CD4-positive, alpha-beta memory T cell (primary cell): ENCODE measurements at regions of chr10 and their contacts with region 1.

Region 1: DNA sequence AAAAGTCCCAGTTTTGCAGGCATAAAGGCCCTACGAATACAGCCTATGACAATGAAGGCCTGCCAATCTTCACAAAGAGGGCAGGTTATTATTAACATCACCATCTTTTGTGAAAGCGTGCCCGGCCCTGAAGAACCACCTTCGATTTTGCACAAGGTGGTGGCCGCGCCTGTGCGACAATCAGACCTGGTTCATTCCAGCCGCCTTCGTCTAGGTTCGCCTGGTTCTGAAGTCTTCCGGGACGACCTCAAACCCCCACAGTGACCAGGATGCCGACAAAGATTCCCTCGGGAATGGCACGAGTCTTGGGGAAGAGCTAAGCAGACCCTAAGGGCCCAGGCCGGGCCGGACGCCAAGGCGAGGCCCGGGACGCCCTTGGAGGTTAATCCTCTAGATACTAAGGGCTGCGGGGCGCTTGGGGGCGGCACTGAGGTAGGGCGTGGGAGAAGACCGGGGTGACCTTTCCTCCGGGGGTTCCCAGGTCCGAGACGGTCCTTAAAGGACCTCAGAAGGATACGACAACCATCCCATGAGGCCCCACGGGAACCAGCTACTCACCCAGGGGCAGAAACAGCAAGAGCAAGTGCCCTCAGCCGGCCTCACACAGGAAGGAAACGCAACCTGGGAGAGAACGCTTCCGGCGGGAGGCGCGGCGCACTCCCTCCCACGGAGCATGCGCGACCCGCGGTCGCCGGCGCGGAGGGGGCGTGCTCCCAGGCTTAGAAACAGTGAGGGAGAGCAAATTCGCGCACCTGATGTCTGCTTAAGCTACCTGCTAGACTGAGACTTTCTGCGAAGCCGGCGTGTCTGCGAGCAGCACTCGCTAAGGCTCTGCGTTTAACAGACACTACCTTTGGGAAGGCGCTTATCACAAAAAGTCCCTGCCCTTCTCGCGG is at the start of gene ATAD1:
- DNase-seq: peak; percentile 89 to 91 (median 91)
- H3K4me3 ChIP-seq: peak within 1 kb of the TSS; percentile 85 to 95
- H3K4me3 Mint-ChIP-seq: peak within 1 kb of the TSS; percentile 88 to 98 (median 94)
- H3K27ac ChIP-seq: peak within 1 kb of the TSS; percentile 94
- H3K27ac Mint-ChIP-seq: peak within 1 kb of the TSS; percentile 94 to 99 (median 98)
- H3K4me1 ChIP-seq: peaks cover 46% of the 10 kb centered on the region
- H3K4me1 Mint-ChIP-seq: peaks cover 27 to 43% (median 35%) of the 10 kb centered on the region in 4 donors
- H3K27me3 ChIP-seq: no peaks in the 10 kb centered on the region
- H3K27me3 Mint-ChIP-seq: no peaks in the 10 kb centered on the region
- total RNA-seq, gene ATAD1: 46.5 to 52.0 TPM

Region 2: GRCh38 chr10:87734987-87735827 is 82.7 kb before region 1 on chr10:
- CTCF ChIA-PET with region 1: no interaction called
- POLR2A ChIA-PET with region 1: no interaction called
- intact Hi-C with region 1: no loop called
- DNase-seq: peak in 1 of 5 donors; percentile 4
- H3K4me3 ChIP-seq: no peak overlapping the region
- H3K4me3 Mint-ChIP-seq: no peak overlapping the region
- H3K27ac ChIP-seq: no peak overlapping the region
- H3K27ac Mint-ChIP-seq: no peak overlapping the region
- H3K4me1 ChIP-seq: no peaks in the 10 kb centered on the region
- H3K4me1 Mint-ChIP-seq: peaks cover 0 to 5% (median 0%) of the 10 kb centered on the region in 4 donors
- H3K27me3 ChIP-seq: no peaks in the 10 kb centered on the region
- H3K27me3 Mint-ChIP-seq: peaks cover 23 to 31% of the 10 kb centered on the region in 2 donors

Region 3: DNA sequence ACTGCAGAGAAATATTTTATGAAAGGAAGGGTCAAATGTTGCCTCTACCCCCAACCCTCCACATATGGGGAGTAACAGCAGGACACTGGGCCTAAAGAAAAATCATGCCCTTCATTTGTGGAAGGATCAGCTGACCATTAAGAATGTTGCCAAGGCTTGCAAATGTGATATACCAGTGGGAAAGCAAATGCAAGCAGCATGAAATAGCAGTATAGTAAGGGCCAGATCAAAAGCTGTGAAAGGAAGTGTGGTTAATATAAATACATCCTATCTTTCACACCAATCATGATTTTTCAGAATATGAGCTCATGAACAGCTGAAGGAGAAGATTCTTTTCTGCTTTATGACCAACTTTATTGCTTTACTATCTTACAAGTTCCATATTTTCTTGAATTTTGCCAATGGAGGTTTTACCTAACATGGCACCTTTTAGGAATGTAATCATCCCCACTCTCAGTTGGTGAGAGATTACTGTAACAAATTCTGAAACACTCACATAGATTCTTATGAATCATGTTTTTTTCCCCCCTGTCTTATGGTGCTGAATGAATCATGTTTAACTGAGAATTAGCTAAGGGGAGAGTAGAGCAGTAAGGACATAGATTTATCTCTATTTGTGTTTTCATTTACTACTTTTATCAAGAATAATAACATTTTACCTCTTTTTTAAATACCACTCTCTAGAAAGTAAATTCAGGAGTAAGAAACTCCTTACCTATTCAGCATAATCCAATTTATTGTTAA is 12.3 kb after region 1 on chr10:
- CTCF ChIA-PET with region 1: interaction called, 25 read pairs
- POLR2A ChIA-PET with region 1: interaction called, 28 read pairs
- intact Hi-C with region 1: no loop called
- DNase-seq: no peak
- H3K4me3 ChIP-seq: no peak overlapping the region
- H3K4me3 Mint-ChIP-seq: no peak overlapping the region
- H3K27ac ChIP-seq: no peak overlapping the region
- H3K27ac Mint-ChIP-seq: peak overlapping the region in 2 of 7 donors; percentile 46 to 60
- H3K4me1 ChIP-seq: peaks cover 27% of the 10 kb centered on the region
- H3K4me1 Mint-ChIP-seq: peaks cover 11 to 34% (median 22%) of the 10 kb centered on the region in 4 donors
- H3K27me3 ChIP-seq: no peaks in the 10 kb centered on the region
- H3K27me3 Mint-ChIP-seq: no peaks in the 10 kb centered on the region

Region 4: GRCh38 chr10:87850742-87851205 is 32.9 kb after region 1 on chr10:
- CTCF ChIA-PET with region 1: interaction called, 14 read pairs
- POLR2A ChIA-PET with region 1: interaction called, 4 read pairs
- intact Hi-C with region 1: no loop called
- DNase-seq: peak; percentile 38 to 59 (median 52)
- H3K4me3 ChIP-seq: no peak overlapping the region
- H3K4me3 Mint-ChIP-seq: no peak overlapping the region
- H3K27ac ChIP-seq: no peak overlapping the region
- H3K27ac Mint-ChIP-seq: no peak overlapping the region
- H3K4me1 ChIP-seq: peaks cover 6% of the 10 kb centered on the region
- H3K4me1 Mint-ChIP-seq: peaks cover 8 to 14% (median 9%) of the 10 kb centered on the region in 4 donors
- H3K27me3 ChIP-seq: no peaks in the 10 kb centered on the region
- H3K27me3 Mint-ChIP-seq: no peaks in the 10 kb centered on the region

Region 5: GRCh38 chr10:88553116-88553752 is 735.4 kb after region 1 on chr10:
- CTCF ChIA-PET with region 1: interaction called, 13 read pairs
- POLR2A ChIA-PET with region 1: no interaction called
- intact Hi-C with region 1: loop called (anchors 1 kb)
- DNase-seq: peak; percentile 43 to 52 (median 49)
- H3K4me3 ChIP-seq: no peak overlapping the region
- H3K4me3 Mint-ChIP-seq: no peak overlapping the region
- H3K27ac ChIP-seq: no peak overlapping the region
- H3K27ac Mint-ChIP-seq: no peak overlapping the region
- H3K4me1 ChIP-seq: no peaks in the 10 kb centered on the region
- H3K4me1 Mint-ChIP-seq: no peaks in the 10 kb centered on the region
- H3K27me3 ChIP-seq: no peaks in the 10 kb centered on the region
- H3K27me3 Mint-ChIP-seq: no peaks in the 10 kb centered on the region

Region 6: DNA sequence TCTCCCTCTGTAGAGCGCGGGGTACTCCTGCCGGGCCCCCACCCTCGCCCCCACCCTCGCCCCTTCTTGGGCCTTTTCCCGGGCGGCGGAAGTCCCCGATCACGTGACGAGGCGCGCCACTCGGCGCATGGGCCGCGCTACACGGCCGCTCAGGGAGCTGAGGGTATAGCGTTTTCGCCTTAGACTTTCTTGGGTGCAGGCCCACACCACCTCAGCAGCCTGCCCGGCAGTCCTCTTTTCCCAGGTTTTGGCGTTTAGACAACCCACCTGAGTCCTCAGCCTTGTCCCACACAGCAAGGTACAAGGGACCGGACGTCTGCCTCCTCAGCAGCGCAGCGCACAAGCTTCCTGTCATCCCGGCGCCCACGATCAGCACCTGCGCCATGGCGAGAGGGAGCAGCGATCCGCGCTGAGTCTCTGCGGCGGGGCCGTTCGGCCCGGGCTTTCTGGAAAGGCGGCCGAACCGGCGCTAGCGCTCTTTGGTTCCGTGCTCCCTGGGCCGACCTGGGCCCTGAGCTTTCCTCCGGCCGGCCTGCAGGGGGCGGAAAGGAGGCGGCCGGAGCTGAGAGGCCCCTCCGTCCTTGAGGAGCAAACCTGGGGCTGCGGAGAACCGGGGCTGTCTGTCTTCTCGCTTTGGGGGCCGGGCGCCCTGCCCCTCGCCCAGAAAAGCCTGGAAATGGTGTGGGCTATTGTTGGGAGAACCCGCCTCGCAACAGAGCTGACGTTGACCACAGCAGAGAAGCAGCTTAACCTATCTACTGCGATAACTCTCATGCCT is 765.1 kb after region 1 on chr10 and contains the start of gene RNLS:
- CTCF ChIA-PET with region 1: interaction called, 6 read pairs
- POLR2A ChIA-PET with region 1: interaction called, 18 read pairs
- intact Hi-C with region 1: loop called (anchors 1 kb)
- DNase-seq: peak; percentile 60 to 73 (median 65)
- H3K4me3 ChIP-seq: peak within 1 kb of the TSS; percentile 72 to 89
- H3K4me3 Mint-ChIP-seq: peak within 1 kb of the TSS; percentile 91 to 96 (median 93)
- H3K27ac ChIP-seq: peak within 1 kb of the TSS; percentile 77
- H3K27ac Mint-ChIP-seq: peak within 1 kb of the TSS; percentile 78 to 96 (median 93)
- H3K4me1 ChIP-seq: peaks cover 7% of the 10 kb centered on the region
- H3K4me1 Mint-ChIP-seq: peaks cover 6 to 26% (median 14%) of the 10 kb centered on the region in 4 donors
- H3K27me3 ChIP-seq: no peaks in the 10 kb centered on the region
- H3K27me3 Mint-ChIP-seq: no peaks in the 10 kb centered on the region
- total RNA-seq, gene RNLS: 1.7 to 1.9 TPM

Region 7: DNA sequence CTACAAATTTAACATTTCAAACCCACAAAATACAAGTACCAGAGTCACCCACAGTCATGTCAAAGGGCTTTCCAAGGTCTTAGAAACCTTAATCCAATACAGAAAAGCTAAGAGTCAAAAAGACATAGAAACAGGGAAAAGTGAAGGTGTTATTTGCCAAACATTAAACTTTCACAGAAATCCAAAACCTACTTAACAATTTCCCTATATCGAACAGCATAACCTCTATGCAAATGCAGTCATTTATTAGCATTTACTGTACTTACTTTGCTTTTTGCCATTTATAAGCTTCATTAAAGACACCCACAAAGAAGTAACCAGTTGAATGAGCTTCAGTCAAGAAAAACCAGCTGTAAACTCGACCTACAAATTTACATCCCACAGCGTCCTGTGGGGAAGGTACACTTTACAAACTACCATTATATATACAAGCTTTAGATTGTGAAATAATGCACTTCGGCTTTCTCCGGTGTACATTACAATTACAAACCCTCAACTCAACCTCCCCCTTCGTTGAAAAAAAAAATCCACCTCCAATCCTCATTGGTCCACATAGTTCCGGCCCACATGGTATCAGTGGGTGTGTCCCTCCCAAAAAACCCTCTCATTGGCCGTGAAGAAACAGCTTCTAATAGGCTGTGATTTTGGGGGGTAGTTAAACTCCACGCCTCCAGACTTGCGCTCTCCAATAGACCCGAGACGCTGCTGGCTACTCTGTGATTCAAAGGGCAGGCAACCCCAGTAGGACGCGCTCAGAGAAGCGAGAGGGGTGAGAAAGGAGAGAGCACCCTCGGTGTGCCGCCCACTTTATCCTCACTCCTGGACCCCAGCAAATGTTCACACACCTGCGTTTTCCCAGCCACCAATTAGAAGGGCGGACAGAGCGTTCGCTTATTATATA is 1825.8 kb after region 1 on chr10:
- CTCF ChIA-PET with region 1: no interaction called
- POLR2A ChIA-PET with region 1: no interaction called
- intact Hi-C with region 1: loop called (anchors 10 kb)
- DNase-seq: peak; percentile 74 to 82 (median 75)
- H3K4me3 ChIP-seq: peak overlapping the region; percentile 55 to 75
- H3K4me3 Mint-ChIP-seq: no peak overlapping the region
- H3K27ac ChIP-seq: peak overlapping the region; percentile 43
- H3K27ac Mint-ChIP-seq: no peak overlapping the region
- H3K4me1 ChIP-seq: peaks cover 16% of the 10 kb centered on the region
- H3K4me1 Mint-ChIP-seq: peaks cover 8 to 11% (median 10%) of the 10 kb centered on the region in 4 donors
- H3K27me3 ChIP-seq: no peaks in the 10 kb centered on the region
- H3K27me3 Mint-ChIP-seq: peaks cover 3 to 4% of the 10 kb centered on the region in 2 donors